ENCODE measurements at regions of chr1 and their contacts with region 1.

Region 1: DNA sequence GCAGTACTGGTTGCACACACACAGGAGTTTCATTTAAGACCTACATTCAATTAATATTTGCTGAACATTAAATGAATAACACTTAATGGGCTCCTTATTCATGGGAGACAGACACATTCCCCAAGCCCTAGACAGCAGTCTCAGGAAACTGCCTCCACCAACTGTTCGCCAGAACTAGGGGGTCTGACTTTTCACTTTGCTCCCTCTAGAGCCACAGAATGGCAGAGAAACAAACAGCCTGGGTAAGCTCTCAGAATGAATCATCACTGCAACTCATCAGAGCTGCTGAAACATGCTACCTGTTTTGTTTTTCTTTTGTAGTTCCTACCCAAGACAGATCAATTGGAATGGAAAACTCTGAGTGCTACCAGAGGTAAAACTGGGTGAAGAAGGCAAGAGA is 31.7 kb downstream of the ELK4 start:
- DNase-seq: no peak
- ATAC-seq: peak; percentile 88
- H3K4me3 ChIP-seq: peak overlapping the region; percentile 36; the same call in 1 of the 2 replicates
- H3K27ac ChIP-seq: peak overlapping the region; percentile 54
- H3K4me1 ChIP-seq: peaks cover 34% of the 10 kb centered on the region
- H3K27me3 ChIP-seq: no peaks in the 10 kb centered on the region
- CTCF ChIP-seq: peak; percentile 18 to 29 (median 21); a peak in 4 of 6 replicates
- EP300 ChIP-seq: no peak
- POLR2A ChIP-seq: no peak
- RAD21 ChIP-seq: no peak

Region 2: GRCh38 chr1:205300886-205301821 is 298.9 kb before region 1 on chr1:
- CTCF ChIA-PET with region 1: no interaction called
- POLR2A ChIA-PET with region 1: no interaction called
- RAD21 ChIA-PET with region 1: no interaction called
- SMC1A ChIA-PET with region 1: no interaction called
- in situ Hi-C with region 1: no loop called
- intact Hi-C with region 1: no loop called
- DNase-seq: no peak
- ATAC-seq: peak; percentile 62
- H3K4me3 ChIP-seq: no peak overlapping the region
- H3K27ac ChIP-seq: no peak overlapping the region
- H3K4me1 ChIP-seq: no peaks in the 10 kb centered on the region
- H3K27me3 ChIP-seq: no peaks in the 10 kb centered on the region; a peak in 1 of 4 replicates
- CTCF ChIP-seq: no peak
- EP300 ChIP-seq: no peak
- POLR2A ChIP-seq: no peak
- RAD21 ChIP-seq: no peak

Region 3: GRCh38 chr1:205616563-205617293 is 16.6 kb after region 1 on chr1:
- CTCF ChIA-PET with region 1: interaction called, 19 read pairs
- POLR2A ChIA-PET with region 1: interaction called, 3 read pairs
- RAD21 ChIA-PET with region 1: interaction called, 6 read pairs
- SMC1A ChIA-PET with region 1: interaction called, 12 read pairs
- in situ Hi-C with region 1: no loop called
- intact Hi-C with region 1: no loop called
- DNase-seq: no peak
- ATAC-seq: peak; percentile 96
- H3K4me3 ChIP-seq: no peak overlapping the region
- H3K27ac ChIP-seq: peak overlapping the region; percentile 24; the same call in 1 of the 2 replicates
- H3K4me1 ChIP-seq: peaks cover 5% of the 10 kb centered on the region; the same call in 1 of the 2 replicates
- H3K27me3 ChIP-seq: no peaks in the 10 kb centered on the region
- CTCF ChIP-seq: no peak
- EP300 ChIP-seq: no peak
- POLR2A ChIP-seq: no peak
- RAD21 ChIP-seq: no peak

Measured in GM12878 (cell line).